CD8-positive, alpha-beta memory T cell (primary cell): ENCODE measurements at regions of chr18 and their contacts with region 1.

Region 1: DNA sequence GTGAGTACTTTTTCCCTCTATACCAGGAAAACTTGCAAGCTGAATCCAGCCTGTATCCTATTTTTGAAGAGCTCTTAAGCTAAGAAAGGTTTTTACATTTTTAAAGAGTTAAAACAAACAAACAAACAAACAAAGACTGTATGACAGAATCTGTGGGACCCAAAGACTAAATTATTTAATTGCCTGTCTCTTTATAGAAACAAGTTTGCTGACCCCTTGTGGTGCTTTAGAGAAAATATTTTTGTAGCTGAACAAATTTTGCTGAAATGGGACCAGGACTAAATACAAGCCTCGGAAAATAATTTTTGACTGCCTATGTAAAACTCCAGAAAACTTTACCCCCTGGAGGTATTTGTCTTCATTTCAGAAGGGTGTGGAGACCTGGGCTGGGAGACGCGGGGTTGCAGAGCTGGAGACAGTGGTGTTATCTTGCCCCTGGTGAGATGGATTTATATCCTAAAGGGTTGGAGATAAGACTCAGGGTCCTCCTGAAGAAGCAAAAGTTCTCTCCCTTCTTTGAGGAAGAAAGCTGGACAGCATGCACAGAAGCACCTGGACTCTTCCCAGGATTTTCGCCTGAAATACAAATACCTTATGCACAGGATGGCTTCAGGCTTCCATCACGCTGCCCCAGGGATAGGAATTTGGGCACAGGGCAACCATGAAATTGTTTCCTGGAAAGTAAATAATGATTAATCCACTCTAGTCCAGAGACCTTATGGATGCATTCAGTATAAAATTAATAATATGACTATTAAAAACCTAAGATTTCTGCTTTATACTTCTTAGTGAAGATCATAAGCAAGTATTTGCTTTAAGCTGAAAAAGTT is 54.3 kb downstream of the TMX3 start:
- DNase-seq: peak in 2 of 5 donors; percentile 9 to 23
- H3K4me3 ChIP-seq: no peak overlapping the region
- H3K4me3 Mint-ChIP-seq: no peak overlapping the region
- H3K27ac ChIP-seq: no peak overlapping the region
- H3K27ac Mint-ChIP-seq: no peak overlapping the region
- H3K4me1 ChIP-seq: no peaks in the 10 kb centered on the region
- H3K4me1 Mint-ChIP-seq: no peaks in the 10 kb centered on the region
- H3K27me3 ChIP-seq: no peaks in the 10 kb centered on the region
- H3K27me3 Mint-ChIP-seq: peaks cover 4 to 14% of the 10 kb centered on the region in 2 donors

Region 2: GRCh38 chr18:67215686-67216085 is 1444.9 kb before region 1 on chr18:
- CTCF ChIA-PET with region 1: interaction called, 12 read pairs
- POLR2A ChIA-PET with region 1: no interaction called
- DNase-seq: no peak
- H3K4me3 ChIP-seq: no peak overlapping the region
- H3K4me3 Mint-ChIP-seq: no peak overlapping the region
- H3K27ac ChIP-seq: no peak overlapping the region
- H3K27ac Mint-ChIP-seq: no peak overlapping the region
- H3K4me1 ChIP-seq: no peaks in the 10 kb centered on the region
- H3K4me1 Mint-ChIP-seq: peaks cover 0 to 3% (median 0%) of the 10 kb centered on the region in 3 donors
- H3K27me3 ChIP-seq: no peaks in the 10 kb centered on the region
- H3K27me3 Mint-ChIP-seq: peaks cover 0 to 1% of the 10 kb centered on the region in 2 donors

Region 3: DNA sequence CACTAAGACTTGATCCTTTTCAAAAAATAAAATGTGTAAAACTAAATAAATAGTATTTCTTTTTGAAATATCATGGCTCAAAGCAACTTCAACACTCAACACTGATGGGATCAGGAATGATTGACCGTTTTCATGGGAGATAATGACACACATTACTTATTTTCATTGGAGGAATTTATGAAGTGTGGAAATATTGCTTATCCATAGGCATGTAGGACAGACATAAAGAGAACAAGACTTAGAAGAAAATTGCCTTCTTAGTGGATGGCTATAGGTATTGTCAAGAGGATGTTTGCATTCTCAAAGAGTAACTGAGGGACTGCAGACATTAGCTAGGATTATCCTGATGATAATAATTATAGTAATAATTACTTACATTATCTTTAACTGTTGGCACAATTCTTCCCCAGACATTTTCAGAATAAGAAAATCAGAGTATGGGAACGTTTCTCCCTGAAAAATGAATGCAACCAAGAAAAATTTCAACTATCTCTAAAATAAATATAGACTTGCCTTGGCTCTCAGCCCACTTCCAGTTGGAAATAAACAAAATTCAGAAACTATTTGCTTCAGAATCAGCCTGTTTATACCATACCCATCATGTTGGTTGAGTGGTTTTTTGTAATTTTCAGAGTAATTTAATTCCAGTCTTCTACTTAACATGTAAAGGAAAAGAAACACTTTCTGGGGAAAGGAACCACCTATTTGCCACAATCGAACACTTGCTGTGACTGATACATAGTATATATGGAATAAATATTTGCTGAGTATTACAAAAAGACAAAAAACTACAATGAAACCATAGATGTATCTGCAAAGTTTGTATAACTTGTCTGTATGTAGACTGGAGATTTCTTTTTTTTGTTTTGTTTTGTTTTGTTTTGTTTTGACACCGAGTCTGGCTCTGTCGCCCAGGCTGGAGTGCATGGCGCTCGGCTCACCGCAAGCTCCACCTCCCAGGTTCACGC is 111.4 kb before region 1 on chr18:
- CTCF ChIA-PET with region 1: no interaction called
- POLR2A ChIA-PET with region 1: no interaction called
- DNase-seq: no peak
- H3K4me3 ChIP-seq: no peak overlapping the region
- H3K4me3 Mint-ChIP-seq: no peak overlapping the region
- H3K27ac ChIP-seq: no peak overlapping the region
- H3K27ac Mint-ChIP-seq: peak overlapping the region in 1 of 8 donors; percentile 11
- H3K4me1 ChIP-seq: no peaks in the 10 kb centered on the region
- H3K4me1 Mint-ChIP-seq: no peaks in the 10 kb centered on the region
- H3K27me3 ChIP-seq: no peaks in the 10 kb centered on the region
- H3K27me3 Mint-ChIP-seq: peaks cover 2 to 3% of the 10 kb centered on the region in 2 donors

Region 4: GRCh38 chr18:68874361-68874760 is 213.8 kb after region 1 on chr18:
- CTCF ChIA-PET with region 1: no interaction called
- POLR2A ChIA-PET with region 1: no interaction called
- DNase-seq: no peak
- H3K4me3 ChIP-seq: no peak overlapping the region
- H3K4me3 Mint-ChIP-seq: no peak overlapping the region
- H3K27ac ChIP-seq: no peak overlapping the region
- H3K27ac Mint-ChIP-seq: no peak overlapping the region
- H3K4me1 ChIP-seq: no peaks in the 10 kb centered on the region
- H3K4me1 Mint-ChIP-seq: no peaks in the 10 kb centered on the region
- H3K27me3 ChIP-seq: no peaks in the 10 kb centered on the region
- H3K27me3 Mint-ChIP-seq: no peaks in the 10 kb centered on the region